Activated T-helper 1 cell treated with anti-CD3 and anti-CD28 coated beads, Interleukin-12 subunit alpha, Interleukin-12 subunit beta, Interleukin-2, Interleukin-4 antibody, amounts not matched to agents 30 ng/mL and 10 ng/mL and 1 ng/mL, durations not matched to agents 14 hours and 24 hours and 36 hours (primary cell): ENCODE measurements at regions of chr9 and their contacts with region 1.

Region 1: GRCh38 chr9:37209431-37210386 is 89.3 kb downstream of the ZCCHC7 start:
- DNase-seq: no peak
- H3K4me3 Mint-ChIP-seq: no peak overlapping the region
- H3K27ac Mint-ChIP-seq: no peak overlapping the region
- H3K4me1 Mint-ChIP-seq: peaks cover 40% of the 10 kb centered on the region
- H3K27me3 Mint-ChIP-seq: no peaks in the 10 kb centered on the region

Region 2: DNA sequence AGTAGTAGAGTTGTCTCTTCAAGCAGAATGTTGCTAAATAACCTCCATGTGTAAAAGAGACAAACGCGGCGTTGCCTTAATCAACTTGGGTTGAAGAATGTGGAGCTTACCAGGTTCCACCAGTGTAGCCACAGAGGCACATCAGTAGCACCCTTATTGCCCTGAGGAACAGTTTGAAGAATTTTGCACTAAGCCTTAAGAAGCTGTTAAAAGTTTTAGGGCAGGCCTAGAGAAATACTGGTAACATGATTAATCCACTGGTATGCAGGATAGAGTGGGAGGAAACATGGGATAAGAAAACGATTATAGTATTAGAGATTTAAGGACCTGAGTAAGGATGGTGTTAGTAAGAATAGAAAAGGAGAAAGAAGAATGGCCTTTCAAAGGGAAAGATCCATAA is 11.3 kb after region 1 on chr9:
- intact Hi-C with region 1: loop called (anchors 1 kb)
- DNase-seq: no peak
- H3K4me3 Mint-ChIP-seq: no peak overlapping the region
- H3K27ac Mint-ChIP-seq: no peak overlapping the region
- H3K4me1 Mint-ChIP-seq: peaks cover 8% of the 10 kb centered on the region
- H3K27me3 Mint-ChIP-seq: no peaks in the 10 kb centered on the region